ENCODE measurements at regions of chr1 and their contacts with region 1.

Region 1: DNA sequence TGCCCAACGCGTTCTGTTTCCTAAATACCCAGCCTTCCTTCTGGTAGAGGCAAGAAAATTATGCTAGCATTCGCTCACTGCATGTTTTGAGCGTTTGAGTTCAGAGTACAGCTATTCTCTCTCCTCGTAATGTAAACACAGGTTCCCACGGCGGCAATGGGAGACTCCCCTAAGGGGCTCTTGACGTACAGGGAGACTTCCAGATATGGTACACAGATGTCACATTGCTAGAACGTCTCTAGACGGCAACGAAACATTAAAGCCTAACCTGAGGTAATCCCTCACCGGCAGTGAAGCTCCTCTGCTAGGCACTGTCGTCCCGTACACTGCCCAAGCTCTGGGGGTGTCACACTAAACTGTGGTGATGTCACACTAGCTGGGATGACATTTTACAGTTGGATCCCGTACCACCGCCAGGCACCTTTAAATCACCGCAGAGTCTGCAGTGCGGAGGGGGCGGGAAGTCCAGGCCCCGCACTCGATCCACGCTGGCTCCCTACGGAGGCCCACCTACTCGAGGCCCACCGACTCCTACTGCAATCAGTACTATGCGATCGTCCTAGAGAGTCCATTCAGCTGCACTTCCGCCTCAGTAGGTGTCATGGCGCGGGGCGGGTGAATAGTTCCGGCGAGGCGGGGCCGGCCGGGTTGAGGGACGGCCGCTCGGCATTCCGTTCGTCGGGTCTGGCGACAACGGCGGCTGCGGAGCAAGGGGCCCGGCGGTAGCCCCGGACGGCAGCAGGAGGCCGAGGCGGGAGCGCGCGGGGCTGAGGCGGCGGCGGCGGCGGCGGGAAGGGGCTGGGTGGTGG is at the start of gene HIPK1:
- DNase-seq: peak; percentile 84 to 95 (median 92)
- ATAC-seq: peak; percentile 66
- H3K4me3 ChIP-seq: peak within 1 kb of the TSS; percentile 96
- H3K4me3 Mint-ChIP-seq: peak within 1 kb of the TSS; percentile 98
- H3K27ac ChIP-seq: peak within 1 kb of the TSS; percentile 98
- H3K27ac Mint-ChIP-seq: peak within 1 kb of the TSS; percentile 100
- H3K4me1 ChIP-seq: peaks cover 33% of the 10 kb centered on the region
- H3K4me1 Mint-ChIP-seq: peaks cover 57% of the 10 kb centered on the region
- H3K27me3 ChIP-seq: no peaks in the 10 kb centered on the region
- H3K27me3 Mint-ChIP-seq: no peaks in the 10 kb centered on the region
- CTCF ChIP-seq: no peak
- total RNA-seq, gene HIPK1: 245 to 251 TPM

Region 2: DNA sequence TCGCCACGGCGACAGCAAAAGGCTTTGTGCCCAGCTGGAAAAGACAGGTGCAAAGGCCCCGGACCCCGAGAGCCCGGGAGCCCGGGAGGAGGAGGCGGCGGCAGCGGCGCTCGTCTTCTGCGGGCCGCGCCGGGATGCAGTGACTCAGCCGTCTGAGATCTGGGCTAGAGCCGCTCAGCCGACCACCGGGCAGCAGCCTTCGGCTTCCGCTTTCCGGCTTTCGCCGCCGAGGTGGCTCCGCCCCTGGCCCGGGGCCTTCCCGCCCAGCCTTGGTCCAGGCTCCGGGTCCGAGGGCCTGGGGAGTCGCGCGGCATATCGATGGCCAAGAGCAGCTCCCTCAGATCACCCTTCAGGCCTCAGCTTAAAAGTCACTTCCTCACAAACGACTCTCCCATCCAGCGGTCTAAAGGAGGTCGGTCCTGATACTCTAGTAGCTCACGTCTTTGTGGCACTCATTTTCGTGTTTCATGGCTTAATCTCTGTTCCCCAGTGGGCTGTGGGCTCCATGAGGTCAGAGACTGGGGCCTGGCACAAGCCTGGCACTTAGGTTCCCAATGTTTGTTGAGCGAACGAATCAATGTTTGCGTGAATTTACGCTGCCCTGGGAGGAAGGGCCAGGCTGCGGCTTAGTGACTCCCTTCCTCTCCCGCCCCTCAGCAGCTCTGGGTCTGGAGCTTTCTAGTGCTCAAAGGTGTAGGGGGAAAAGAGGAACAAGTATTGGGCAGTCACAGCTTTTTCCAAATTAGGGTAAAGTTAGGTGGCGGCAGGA is 169.6 kb before region 1 on chr1 and contains the start of gene PHTF1:
- CTCF ChIA-PET with region 1: no interaction called
- POLR2A ChIA-PET with region 1: interaction called, 17 read pairs
- intact Hi-C with region 1: no loop called
- DNase-seq: peak; percentile 20 to 82 (median 46)
- ATAC-seq: peak; percentile 68
- H3K4me3 ChIP-seq: peak within 1 kb of the TSS; percentile 91
- H3K4me3 Mint-ChIP-seq: peak within 1 kb of the TSS; percentile 95
- H3K27ac ChIP-seq: peak within 1 kb of the TSS; percentile 57 to 81
- H3K27ac Mint-ChIP-seq: peak within 1 kb of the TSS; percentile 80
- H3K4me1 ChIP-seq: peaks cover 20% of the 10 kb centered on the region
- H3K4me1 Mint-ChIP-seq: peaks cover 41% of the 10 kb centered on the region
- H3K27me3 ChIP-seq: no peaks in the 10 kb centered on the region
- H3K27me3 Mint-ChIP-seq: no peaks in the 10 kb centered on the region
- CTCF ChIP-seq: no peak
- total RNA-seq, gene PHTF1: 3.1 to 4.0 TPM

Region 3: DNA sequence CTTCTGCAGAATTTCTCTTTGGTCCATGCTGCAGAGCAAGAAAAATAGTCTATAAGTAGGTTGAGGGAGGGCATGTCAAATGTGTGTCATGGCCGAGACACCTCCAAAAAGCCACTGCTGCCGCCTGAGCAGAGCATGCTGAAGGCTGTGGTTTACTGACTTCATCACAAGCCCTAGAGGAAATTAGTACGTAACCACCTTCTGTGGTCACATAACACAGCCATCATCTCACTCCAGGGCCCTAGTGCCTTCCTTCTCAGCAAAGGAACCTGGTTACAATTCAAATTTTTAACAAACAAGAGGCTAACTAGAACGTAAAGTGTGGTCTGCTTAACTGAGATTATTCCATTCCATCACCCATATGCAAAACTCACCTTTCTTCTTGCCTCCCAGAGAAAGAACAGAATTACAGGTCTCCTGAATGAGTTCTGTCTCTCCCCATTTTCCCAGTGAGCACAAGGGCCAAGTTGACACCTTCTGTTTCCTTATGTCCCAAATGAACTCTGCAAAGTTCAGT is 57.5 kb before region 1 on chr1 and contains the start of gene PTPN22:
- CTCF ChIA-PET with region 1: interaction called, 15 read pairs
- POLR2A ChIA-PET with region 1: interaction called, 8 read pairs
- intact Hi-C with region 1: loop called (anchors 1 to 5 kb)
- DNase-seq: peak; percentile 65 to 95 (median 75)
- ATAC-seq: peak; percentile 92
- H3K4me3 ChIP-seq: peak within 1 kb of the TSS; percentile 55
- H3K4me3 Mint-ChIP-seq: peak within 1 kb of the TSS; percentile 90
- H3K27ac ChIP-seq: peak within 1 kb of the TSS; percentile 75 to 78
- H3K27ac Mint-ChIP-seq: peak within 1 kb of the TSS; percentile 94
- H3K4me1 ChIP-seq: peaks cover 38% of the 10 kb centered on the region
- H3K4me1 Mint-ChIP-seq: peaks cover 75% of the 10 kb centered on the region
- H3K27me3 ChIP-seq: no peaks in the 10 kb centered on the region
- H3K27me3 Mint-ChIP-seq: no peaks in the 10 kb centered on the region
- CTCF ChIP-seq: no peak
- total RNA-seq, gene PTPN22: 28.3 to 30.2 TPM

Region 4: DNA sequence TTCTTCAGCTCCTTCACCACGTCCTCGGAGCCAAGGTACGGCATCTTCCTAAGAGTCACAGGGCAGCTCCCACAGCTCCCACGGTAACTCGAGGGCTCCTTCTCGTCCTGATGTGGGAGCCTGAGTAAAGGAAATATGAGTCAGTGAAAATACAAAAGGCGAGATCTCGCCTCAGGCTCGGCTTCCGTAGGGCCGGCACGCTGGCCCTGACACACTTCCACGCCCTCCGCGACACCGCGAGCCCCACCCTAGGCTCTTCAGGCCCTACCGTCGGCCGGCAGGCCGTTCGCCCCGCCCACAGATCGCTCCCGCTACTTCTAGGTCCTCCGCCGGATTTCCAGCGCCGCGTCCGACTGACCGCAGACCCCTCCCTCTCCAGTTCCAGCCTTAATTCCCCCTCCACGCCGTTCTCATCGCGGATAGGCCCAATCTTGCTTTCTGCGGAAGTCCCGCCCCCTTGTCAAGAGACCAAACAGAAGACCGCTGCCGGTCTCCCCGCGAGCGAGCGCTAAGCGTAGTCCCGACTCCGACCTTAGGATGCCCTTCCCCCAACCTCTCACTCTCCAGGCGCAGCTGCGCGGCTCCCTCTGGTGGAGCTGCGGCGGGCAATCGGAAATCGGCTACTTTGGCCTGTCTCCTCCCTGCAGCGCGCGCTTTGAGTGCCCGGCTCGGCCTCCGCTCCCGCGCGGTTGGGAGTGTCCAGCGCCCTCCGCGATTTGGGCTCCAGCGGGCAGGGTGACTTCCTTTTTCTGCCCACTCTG is 24.3 kb before region 1 on chr1 and contains the starts of genes AP4B1 and DCLRE1B:
- CTCF ChIA-PET with region 1: interaction called, 60 read pairs
- POLR2A ChIA-PET with region 1: interaction called, 256 read pairs
- intact Hi-C with region 1: loop called (anchors 1 kb)
- DNase-seq: peak; percentile 89 to 100 (median 94)
- ATAC-seq: peak; percentile 92
- H3K4me3 ChIP-seq: peak within 1 kb of the TSS; percentile 96
- H3K4me3 Mint-ChIP-seq: peak within 1 kb of the TSS; percentile 99
- H3K27ac ChIP-seq: peak within 1 kb of the TSS; percentile 86 to 89
- H3K27ac Mint-ChIP-seq: peak within 1 kb of the TSS; percentile 98
- H3K4me1 ChIP-seq: peaks cover 46% of the 10 kb centered on the region
- H3K4me1 Mint-ChIP-seq: peaks cover 52% of the 10 kb centered on the region
- H3K27me3 ChIP-seq: no peaks in the 10 kb centered on the region
- H3K27me3 Mint-ChIP-seq: no peaks in the 10 kb centered on the region
- CTCF ChIP-seq: peak; percentile 73
- total RNA-seq, gene AP4B1: 44.1 to 48.0 TPM
- total RNA-seq, gene DCLRE1B: 6.4 to 6.8 TPM

Region 5: GRCh38 chr1:113940365-113941244 is 11.5 kb after region 1 on chr1:
- CTCF ChIA-PET with region 1: interaction called, 56 read pairs
- POLR2A ChIA-PET with region 1: interaction called, 245 read pairs
- intact Hi-C with region 1: loop called in 1 of 2 experiments (anchors 1 kb)
- DNase-seq: peak in 6 of 14 experiments; percentile 17 to 80 (median 34)
- ATAC-seq: peak; percentile 45
- H3K4me3 ChIP-seq: peak overlapping the region; percentile 27
- H3K4me3 Mint-ChIP-seq: peak overlapping the region; percentile 82
- H3K27ac ChIP-seq: peak overlapping the region; percentile 33 to 45
- H3K27ac Mint-ChIP-seq: peak overlapping the region; percentile 78
- H3K4me1 ChIP-seq: peaks cover 57% of the 10 kb centered on the region
- H3K4me1 Mint-ChIP-seq: peaks cover 71% of the 10 kb centered on the region
- H3K27me3 ChIP-seq: no peaks in the 10 kb centered on the region
- H3K27me3 Mint-ChIP-seq: no peaks in the 10 kb centered on the region
- CTCF ChIP-seq: no peak

Region 6: DNA sequence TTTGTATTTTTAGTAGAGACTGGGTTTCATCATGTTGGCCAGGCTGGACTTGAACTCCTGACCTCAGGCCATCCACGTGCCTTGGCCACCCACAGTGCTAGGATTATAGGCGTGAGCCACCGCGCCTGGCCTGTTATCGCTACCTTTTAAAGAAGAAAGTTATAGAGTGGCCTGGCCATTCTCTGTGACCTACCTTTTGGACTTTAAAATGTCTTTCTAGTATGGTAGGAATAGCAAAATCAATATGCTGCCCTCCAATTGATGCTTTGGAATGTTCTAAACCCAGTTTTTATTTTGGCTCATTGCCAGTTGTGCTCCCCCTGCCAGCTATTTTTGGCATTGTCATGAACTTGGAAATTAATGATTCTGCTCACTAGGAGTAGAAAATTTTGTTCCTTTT is 19.9 kb after region 1 on chr1:
- CTCF ChIA-PET with region 1: interaction called, 56 read pairs
- POLR2A ChIA-PET with region 1: interaction called, 245 read pairs
- intact Hi-C with region 1: loop called (anchors 1 to 2 kb)
- DNase-seq: peak in 2 of 14 experiments; percentile 58 to 63
- ATAC-seq: no peak
- H3K4me3 ChIP-seq: no peak overlapping the region
- H3K4me3 Mint-ChIP-seq: peak overlapping the region; percentile 51
- H3K27ac ChIP-seq: peak overlapping the region; percentile 60 to 66
- H3K27ac Mint-ChIP-seq: peak overlapping the region; percentile 89
- H3K4me1 ChIP-seq: peaks cover 50% of the 10 kb centered on the region
- H3K4me1 Mint-ChIP-seq: peaks cover 92% of the 10 kb centered on the region
- H3K27me3 ChIP-seq: no peaks in the 10 kb centered on the region
- H3K27me3 Mint-ChIP-seq: no peaks in the 10 kb centered on the region
- CTCF ChIP-seq: peak; percentile 43

Region 7: DNA sequence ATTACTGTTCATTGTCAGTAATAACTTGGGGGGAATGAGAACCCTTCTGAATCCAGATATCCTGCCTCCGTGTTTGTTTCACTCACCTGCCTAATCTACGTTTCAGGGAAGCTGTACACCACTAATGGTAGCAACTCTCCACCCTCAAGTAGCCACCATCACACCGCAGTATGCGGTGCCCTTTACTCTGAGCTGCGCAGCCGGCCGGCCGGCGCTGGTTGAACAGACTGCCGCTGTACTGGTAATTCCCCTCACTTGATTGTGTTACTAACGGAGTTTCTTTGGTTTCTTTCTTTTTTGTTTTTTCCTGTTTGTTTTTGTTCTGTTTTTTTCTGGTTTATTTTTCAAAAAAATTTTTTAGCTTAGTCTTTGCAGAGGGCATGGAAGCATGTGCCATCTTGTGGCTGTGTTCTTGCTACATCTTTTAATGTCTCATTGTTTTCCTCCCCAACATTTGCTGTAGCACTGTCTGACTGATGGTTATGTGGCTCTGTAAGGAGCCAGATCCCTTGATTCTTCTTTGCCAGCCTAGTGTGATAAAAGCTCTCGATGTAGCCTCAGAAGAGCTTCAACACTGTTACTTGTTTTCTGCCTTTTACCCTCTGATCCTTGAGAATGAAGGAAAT is 34.2 kb after region 1 on chr1:
- CTCF ChIA-PET with region 1: interaction called, 22 read pairs
- POLR2A ChIA-PET with region 1: interaction called, 31 read pairs
- intact Hi-C with region 1: loop called in 1 of 2 experiments (anchors 5 kb)
- DNase-seq: peak in 2 of 14 experiments; percentile 36 to 39
- ATAC-seq: peak; percentile 56
- H3K4me3 ChIP-seq: no peak overlapping the region
- H3K4me3 Mint-ChIP-seq: no peak overlapping the region
- H3K27ac ChIP-seq: no peak overlapping the region
- H3K27ac Mint-ChIP-seq: peak overlapping the region; percentile 65
- H3K4me1 ChIP-seq: no peaks in the 10 kb centered on the region
- H3K4me1 Mint-ChIP-seq: peaks cover 26% of the 10 kb centered on the region
- H3K27me3 ChIP-seq: no peaks in the 10 kb centered on the region
- H3K27me3 Mint-ChIP-seq: no peaks in the 10 kb centered on the region
- CTCF ChIP-seq: no peak

Measured in CD4-positive, alpha-beta T cell (primary cell).